ENCODE measurements at regions of chr20 and their contacts with region 1.

Region 1: GRCh38 chr20:17504898-17505635 is 26.1 kb downstream of the BFSP1 start:
- DNase-seq: peak; percentile 30 to 91
- H3K4me3 ChIP-seq: no peak overlapping the region
- CTCF ChIP-seq: no peak
- POLR2A ChIP-seq: no peak

Region 2: DNA sequence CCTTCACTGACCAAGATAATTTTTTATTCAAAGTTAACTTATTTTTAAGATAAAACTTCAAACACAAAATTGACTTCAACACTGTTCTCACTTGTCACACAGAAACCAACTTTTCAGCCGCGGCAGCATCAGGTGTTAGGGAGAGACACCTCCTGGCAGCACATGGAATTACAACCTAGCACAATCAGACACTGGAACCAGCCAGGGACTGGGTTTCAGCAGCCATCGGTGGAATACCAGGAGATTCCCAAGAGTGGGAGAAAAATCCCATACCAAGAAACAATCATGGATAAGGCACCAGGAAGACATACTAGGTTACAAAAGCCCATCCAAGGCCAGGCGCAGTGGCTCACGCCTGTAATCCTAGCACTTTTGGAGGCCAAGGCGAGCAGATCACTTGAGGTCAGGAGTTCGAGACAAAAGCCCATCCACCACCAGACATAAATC is 393.5 kb after region 1 on chr20:
- intact Hi-C with region 1: loop called (anchors 10 kb)
- DNase-seq: peak; percentile 75 to 93
- H3K4me3 ChIP-seq: no peak overlapping the region
- CTCF ChIP-seq: peak in 2 of 3 donors; percentile 58 to 92
- POLR2A ChIP-seq: no peak

Measured in lower leg skin (tissue), 4 donors.